AG04450 (cell line): ENCODE measurements at regions of chr22 and their contacts with region 1.

Region 1: DNA sequence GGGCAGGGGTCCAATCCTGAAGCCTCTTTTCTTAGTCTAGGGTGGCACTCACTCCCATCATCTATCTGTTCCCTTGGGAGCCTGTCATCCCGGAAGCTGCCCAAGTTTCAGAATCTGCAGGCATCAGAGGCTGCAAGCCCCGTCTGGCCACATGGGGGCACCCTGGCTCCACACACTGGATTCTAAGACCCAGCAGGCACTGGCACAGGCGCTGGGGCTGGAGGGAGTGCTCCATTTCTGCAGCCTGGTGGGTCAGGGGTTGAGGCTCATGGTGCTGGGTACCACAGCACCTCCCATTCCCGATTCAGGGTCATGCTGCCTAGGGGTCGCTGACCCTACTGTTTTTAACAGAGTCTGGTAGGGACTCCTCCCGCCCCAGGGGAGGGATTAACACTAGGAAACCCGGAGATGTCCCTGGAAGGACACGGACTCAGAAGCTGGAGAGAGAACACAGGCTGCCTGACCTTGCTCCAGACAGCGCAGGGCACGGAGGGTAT is 243.9 kb upstream of the SYN3 start:
- DNase-seq: peak; percentile 39
- H3K4me3 ChIP-seq: no peak overlapping the region
- H3K27ac ChIP-seq: no peak overlapping the region
- H3K27me3 ChIP-seq: no peaks in the 10 kb centered on the region
- CTCF ChIP-seq: peak; percentile 99

Region 2: GRCh38 chr22:33335611-33336279 is 33.6 kb after region 1 on chr22:
- CTCF ChIA-PET with region 1: no interaction called
- POLR2A ChIA-PET with region 1: no interaction called
- DNase-seq: no peak
- H3K4me3 ChIP-seq: no peak overlapping the region
- H3K27ac ChIP-seq: no peak overlapping the region
- H3K27me3 ChIP-seq: no peaks in the 10 kb centered on the region
- CTCF ChIP-seq: no peak

Region 3: DNA sequence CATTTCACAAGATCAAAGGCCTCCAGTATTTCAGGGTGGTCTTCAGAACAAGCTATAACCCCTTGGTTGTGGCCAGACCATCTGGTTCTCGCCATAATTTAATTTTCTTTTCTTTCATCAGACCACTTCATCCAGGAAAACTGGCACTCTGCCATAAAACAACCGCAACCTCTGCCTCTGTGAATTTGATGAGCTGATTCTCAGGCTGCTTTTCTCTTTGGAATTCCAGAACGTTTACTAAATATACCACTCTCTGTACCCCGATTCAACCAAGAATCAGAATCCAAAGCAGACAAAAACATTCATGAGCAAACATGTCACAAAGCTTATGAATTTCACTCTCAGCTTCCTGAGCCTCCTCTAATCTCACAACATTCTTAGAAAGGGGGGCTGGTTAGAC is 87.8 kb after region 1 on chr22:
- CTCF ChIA-PET with region 1: no interaction called
- POLR2A ChIA-PET with region 1: no interaction called
- DNase-seq: peak; percentile 4
- H3K4me3 ChIP-seq: no peak overlapping the region
- H3K27ac ChIP-seq: peak overlapping the region; percentile 39
- H3K27me3 ChIP-seq: no peaks in the 10 kb centered on the region
- CTCF ChIP-seq: no peak

Region 4: GRCh38 chr22:33426451-33426850 is 124.4 kb after region 1 on chr22:
- CTCF ChIA-PET with region 1: no interaction called
- POLR2A ChIA-PET with region 1: no interaction called
- DNase-seq: no peak
- H3K4me3 ChIP-seq: no peak overlapping the region
- H3K27ac ChIP-seq: no peak overlapping the region
- H3K27me3 ChIP-seq: no peaks in the 10 kb centered on the region
- CTCF ChIP-seq: no peak

Region 5: DNA sequence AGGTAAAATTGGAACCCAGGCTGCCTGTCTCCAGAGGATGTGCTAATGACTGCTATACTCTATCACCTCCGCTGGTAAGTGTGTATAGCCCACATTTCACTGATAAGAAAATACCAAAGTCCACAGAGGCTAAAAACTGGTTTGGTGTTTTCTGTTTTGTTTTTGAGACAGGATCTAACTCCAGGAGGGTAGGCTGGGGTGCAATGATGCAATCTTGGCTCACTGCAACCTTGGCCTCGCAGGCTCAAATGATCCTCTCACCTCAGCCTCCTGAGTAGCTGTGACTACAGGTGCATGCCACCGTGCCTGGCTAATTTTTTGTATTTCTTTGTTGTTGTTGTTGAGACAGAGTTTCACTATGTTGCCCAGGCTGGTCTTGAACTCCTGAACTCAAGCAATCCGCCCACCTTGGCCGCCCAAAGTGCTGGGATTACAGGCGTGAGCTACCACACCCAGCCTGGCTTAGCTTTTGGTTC is 208.4 kb after region 1 on chr22:
- CTCF ChIA-PET with region 1: interaction called, 10 read pairs
- POLR2A ChIA-PET with region 1: no interaction called
- DNase-seq: no peak
- H3K4me3 ChIP-seq: no peak overlapping the region
- H3K27ac ChIP-seq: no peak overlapping the region
- H3K27me3 ChIP-seq: no peaks in the 10 kb centered on the region
- CTCF ChIP-seq: no peak

Region 6: DNA sequence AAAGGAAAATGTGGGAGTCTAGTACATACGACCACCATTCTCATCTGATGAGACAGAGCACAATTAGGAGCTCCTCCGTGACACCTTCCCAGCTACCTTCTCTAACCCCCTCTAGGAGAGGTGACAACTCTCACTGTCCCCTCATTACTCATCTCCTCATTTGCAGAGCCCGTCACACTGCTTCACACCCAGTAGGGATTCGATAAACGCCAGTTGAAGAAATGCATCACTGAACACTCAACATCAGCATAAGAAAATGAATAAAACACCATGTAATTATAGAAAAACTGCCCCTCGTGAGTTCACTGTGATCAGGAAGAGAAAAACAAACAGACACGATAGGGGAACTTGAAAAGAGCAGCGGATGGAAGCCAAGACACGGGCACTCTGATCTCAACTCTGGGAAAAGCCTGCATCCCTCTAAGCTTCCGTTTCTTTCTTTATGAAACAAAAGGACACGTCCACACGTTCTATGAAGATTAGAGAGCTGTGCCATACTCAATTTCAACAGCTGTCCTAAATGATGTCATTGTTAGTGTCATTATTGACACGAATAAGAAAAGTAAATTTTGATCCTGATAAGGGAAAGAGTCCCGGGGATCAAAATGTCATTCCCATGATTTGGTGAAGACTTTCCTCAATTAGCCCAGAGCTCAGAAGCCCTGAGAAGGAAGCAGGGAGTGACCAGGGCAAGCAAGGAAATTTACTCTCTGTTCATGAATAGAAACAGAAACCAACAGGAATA is 261.3 kb after region 1 on chr22:
- CTCF ChIA-PET with region 1: interaction called, 12 read pairs
- POLR2A ChIA-PET with region 1: no interaction called
- DNase-seq: no peak
- H3K4me3 ChIP-seq: no peak overlapping the region
- H3K27ac ChIP-seq: no peak overlapping the region
- H3K27me3 ChIP-seq: no peaks in the 10 kb centered on the region
- CTCF ChIP-seq: no peak

Region 7: GRCh38 chr22:33579448-33580093 is 277.5 kb after region 1 on chr22:
- CTCF ChIA-PET with region 1: interaction called, 24 read pairs
- POLR2A ChIA-PET with region 1: no interaction called
- DNase-seq: no peak
- H3K4me3 ChIP-seq: no peak overlapping the region
- H3K27ac ChIP-seq: no peak overlapping the region
- H3K27me3 ChIP-seq: no peaks in the 10 kb centered on the region
- CTCF ChIP-seq: peak; percentile 92